K562 (cell line): ENCODE measurements at regions of chr15 and their contacts with region 1.

Region 1: GRCh38 chr15:93030430-93031105 is 58.4 kb downstream of the RGMA start:
- DNase-seq: peak; percentile 77 to 83 (median 80)
- ATAC-seq: peak; percentile 88
- H3K4me3 ChIP-seq: no peak overlapping the region
- H3K27ac ChIP-seq: no peak overlapping the region
- H3K4me1 ChIP-seq: peaks cover 0 to 20% of the 10 kb centered on the region in 2 experiments; a peak in 4 of 5 replicates
- H3K27me3 ChIP-seq: no peaks in the 10 kb centered on the region
- CTCF ChIP-seq: peak; percentile 80 to 89 (median 87)
- EP300 ChIP-seq: no peak
- POLR2A ChIP-seq: no peak
- RAD21 ChIP-seq: peak; percentile 67 to 85

Region 2: DNA sequence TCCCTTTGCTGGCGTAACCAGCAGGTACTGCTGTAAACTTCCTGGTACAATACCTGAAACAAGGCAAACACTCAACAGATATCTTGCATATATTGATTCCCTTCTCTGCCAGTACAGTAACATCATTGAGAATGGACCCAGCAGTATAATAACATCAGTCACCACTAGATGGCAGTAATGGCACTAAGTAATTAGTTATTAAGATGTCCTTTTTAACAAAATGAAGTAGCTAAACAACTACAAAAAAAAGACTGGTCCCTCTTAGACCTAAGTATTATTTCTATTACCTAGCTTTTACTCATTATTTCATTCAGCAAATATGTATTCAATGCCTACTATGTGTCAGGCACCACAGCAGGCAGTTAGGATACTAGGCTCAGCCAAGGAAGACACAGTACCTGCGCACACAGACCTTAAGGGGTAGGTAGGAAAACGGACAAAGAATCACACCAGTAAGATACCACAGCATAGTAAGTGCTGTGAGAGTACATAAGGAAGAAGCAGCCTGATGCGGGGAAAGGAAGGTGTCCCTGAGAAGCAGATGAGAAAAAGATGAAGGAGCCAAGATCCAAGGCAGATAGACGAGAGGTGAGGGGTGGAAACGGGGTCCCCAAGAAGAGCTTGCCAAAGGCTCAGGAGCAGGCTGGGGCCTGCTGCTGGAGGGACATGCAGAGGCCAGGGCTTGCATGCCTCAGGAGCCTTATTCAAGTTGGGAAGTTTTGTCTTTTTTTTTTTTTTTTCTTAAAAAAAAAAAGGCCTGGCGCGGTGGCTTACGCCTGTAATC is 233.2 kb before region 1 on chr15:
- CTCF ChIA-PET with region 1: no interaction called
- POLR2A ChIA-PET with region 1: interaction called, 3 read pairs
- in situ Hi-C with region 1: no loop called
- intact Hi-C with region 1: loop called (anchors 10 kb)
- DNase-seq: peak; percentile 52 to 84 (median 57)
- ATAC-seq: peak; percentile 74
- H3K4me3 ChIP-seq: no peak overlapping the region
- H3K27ac ChIP-seq: peak overlapping the region; percentile 28; the same call in 2 of the 3 replicates
- H3K4me1 ChIP-seq: peaks cover 18 to 23% of the 10 kb centered on the region in 2 experiments
- H3K27me3 ChIP-seq: no peaks in the 10 kb centered on the region
- CTCF ChIP-seq: peak; percentile 40 to 80 (median 65); a peak in 4 of 6 replicates
- EP300 ChIP-seq: no peak
- POLR2A ChIP-seq: no peak
- RAD21 ChIP-seq: peak; percentile 80 to 91

Region 3: DNA sequence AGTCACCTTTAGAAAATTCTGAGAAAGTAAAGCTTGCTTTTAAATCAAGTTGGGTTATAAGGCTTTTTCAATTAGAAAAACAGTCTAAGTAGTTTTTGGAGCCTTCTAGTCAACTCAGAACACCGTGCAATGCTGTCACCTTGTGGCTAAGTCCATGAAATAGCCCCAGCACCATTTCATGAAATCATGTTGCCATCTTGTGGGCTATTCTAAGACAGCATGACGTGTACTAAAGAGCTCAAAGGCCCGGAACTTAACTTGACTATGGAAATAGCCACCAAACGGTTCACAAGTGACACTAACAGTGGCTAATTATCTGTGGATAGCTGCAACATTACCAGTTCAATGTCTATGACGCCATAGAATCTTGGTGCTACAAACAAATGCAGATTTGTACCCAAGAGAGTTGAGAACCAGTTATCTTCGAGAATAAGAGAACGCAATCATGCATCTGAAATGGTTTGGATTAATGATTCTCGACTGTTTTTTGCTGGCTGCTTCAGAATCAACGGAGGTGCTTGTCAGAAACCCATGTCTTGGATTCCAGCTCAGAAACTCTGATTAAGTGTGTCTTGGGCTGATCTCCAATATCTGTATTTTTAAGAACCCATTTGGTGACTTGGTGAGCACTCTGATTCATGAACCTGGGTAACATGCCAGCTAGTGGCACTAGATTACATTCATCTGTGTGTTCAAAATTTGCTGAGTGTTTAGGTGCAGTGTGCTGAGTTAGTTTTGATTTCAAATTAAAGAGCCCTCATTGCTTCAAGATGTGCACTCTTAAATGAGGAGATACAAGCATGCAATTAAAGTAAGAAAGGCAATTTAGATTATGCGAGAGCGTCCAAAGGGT is 1089.6 kb after region 1 on chr15:
- CTCF ChIA-PET with region 1: interaction called, 24 read pairs
- POLR2A ChIA-PET with region 1: interaction called, 3 read pairs
- in situ Hi-C with region 1: loop called (anchors 5 kb)
- intact Hi-C with region 1: no loop called
- DNase-seq: peak; percentile 25 to 53 (median 36)
- ATAC-seq: peak; percentile 81
- H3K4me3 ChIP-seq: no peak overlapping the region
- H3K27ac ChIP-seq: no peak overlapping the region
- H3K4me1 ChIP-seq: no peaks in the 10 kb centered on the region
- H3K27me3 ChIP-seq: no peaks in the 10 kb centered on the region
- CTCF ChIP-seq: peak; percentile 72 to 98 (median 97)
- EP300 ChIP-seq: no peak
- POLR2A ChIP-seq: no peak
- RAD21 ChIP-seq: peak; percentile 93 to 97

Region 4: GRCh38 chr15:94324117-94324826 is 1293.7 kb after region 1 on chr15:
- CTCF ChIA-PET with region 1: interaction called, 7 read pairs
- POLR2A ChIA-PET with region 1: no interaction called
- in situ Hi-C with region 1: loop called (anchors 25 kb)
- intact Hi-C with region 1: loop called (anchors 2 kb)
- DNase-seq: peak; percentile 35 to 49 (median 45)
- ATAC-seq: peak; percentile 92
- H3K4me3 ChIP-seq: no peak overlapping the region
- H3K27ac ChIP-seq: no peak overlapping the region
- H3K4me1 ChIP-seq: no peaks in the 10 kb centered on the region
- H3K27me3 ChIP-seq: no peaks in the 10 kb centered on the region
- CTCF ChIP-seq: peak; percentile 65 to 83 (median 80)
- EP300 ChIP-seq: no peak
- POLR2A ChIP-seq: no peak
- RAD21 ChIP-seq: peak; percentile 50 to 74